Left colon (tissue), 2 donors: ENCODE measurements at regions of chr2 and their contacts with region 1.

Region 1: DNA sequence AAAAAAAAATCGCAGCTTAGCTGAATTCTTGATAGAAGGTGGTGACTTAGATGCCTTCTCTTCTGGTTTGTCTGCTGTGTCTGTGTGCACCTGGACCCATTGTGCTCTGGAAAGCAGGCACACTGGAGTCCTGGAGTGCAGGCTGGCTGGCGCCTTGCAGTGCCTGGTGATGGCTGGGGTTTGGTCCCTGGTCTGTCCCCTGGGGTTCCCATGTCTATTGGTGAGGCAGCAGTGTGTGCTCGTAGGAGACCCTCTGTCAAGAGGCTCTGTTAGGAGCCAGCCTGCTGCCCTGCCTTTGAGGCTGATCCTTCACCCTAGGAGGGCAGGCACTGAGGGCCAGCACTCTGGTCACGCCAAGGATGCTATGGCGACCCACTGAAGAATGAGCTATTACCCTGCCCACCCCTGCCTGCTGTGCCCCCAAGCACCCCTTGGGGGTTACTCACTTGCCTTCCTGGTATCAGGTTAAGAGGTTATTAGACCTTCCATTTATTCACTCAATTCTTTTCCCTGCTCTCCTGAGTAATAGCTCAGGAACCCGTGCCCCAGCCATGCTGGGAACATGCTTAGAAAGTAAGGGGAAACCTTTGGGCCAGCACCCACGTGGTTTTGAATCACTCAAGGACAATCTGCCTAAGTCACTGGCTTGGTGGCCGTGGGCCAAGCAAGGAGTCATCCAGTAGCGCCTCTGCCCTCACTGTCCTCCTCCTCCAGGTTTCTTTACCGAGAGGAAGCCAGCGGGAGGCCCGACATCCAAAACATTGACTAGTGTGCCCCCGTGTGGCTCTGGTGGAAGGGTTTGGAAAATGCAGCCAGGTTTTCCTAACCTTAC is 284.5 kb downstream of the PRKCE start:
- DNase-seq: peak; percentile 86 to 91
- ATAC-seq: peak; percentile 84

Region 2: GRCh38 chr2:45643543-45644542 is 292.2 kb before region 1 on chr2:
- intact Hi-C with region 1: loop called (anchors 5 kb)
- DNase-seq: peak in 1 of 2 donors; percentile 75
- ATAC-seq: peak; percentile 96

Region 3: DNA sequence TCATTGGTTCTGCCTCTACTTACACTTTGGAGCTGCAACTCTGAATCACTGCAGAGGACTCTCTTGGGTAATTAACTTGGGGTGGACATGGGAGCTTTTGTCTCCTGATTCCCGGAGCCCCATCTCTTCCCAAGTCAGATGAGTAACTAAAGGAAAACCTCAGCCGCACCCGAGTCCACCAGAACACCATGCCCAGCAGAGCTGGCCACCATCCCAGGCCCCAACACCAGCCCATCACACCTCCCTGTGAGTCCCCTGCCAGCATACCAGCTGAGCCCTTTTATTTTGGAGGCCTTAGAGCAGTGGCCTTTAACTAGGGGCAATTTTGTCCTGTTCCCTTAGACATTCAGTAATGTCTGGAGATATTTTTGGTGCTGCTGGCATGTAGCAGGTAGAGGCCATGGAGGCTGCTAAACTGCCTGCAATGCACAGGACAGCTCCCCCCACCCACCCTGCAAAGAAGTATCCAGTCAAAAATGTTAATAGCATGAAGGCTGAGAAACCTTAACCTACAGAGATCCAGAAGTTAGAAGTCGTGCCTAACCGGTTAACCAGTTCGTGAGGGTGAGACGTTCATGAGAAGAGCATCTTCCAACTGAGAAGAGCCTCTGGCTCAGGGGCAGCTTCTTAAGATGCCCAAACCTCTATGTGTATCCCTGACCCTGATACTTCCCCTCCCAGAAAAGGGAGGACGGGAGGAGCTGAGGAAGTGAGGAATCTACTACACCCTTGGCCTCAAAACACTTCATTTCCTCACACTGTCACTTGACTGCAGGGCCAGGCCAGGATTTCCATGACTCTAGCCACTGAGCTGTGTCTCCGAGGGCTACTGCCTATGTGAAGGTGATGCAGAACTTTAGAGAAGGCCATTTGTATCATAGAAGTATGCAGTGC is 221.3 kb after region 1 on chr2:
- intact Hi-C with region 1: no loop called
- DNase-seq: no peak
- ATAC-seq: no peak